Activated CD8-positive, alpha-beta T cell treated with anti-CD3 and anti-CD28 coated beads for 36 hours (primary cell): ENCODE measurements at regions of chr2 and their contacts with region 1.

Region 1: GRCh38 chr2:230762317-230762896 is 49.8 kb downstream of the CAB39 start:
- DNase-seq: peak; percentile 53
- ATAC-seq: peak; percentile 92
- H3K4me3 Mint-ChIP-seq: no peak overlapping the region
- H3K27ac Mint-ChIP-seq: no peak overlapping the region
- H3K4me1 Mint-ChIP-seq: peaks cover 59% of the 10 kb centered on the region
- H3K27me3 Mint-ChIP-seq: no peaks in the 10 kb centered on the region
- CTCF ChIP-seq: peak; percentile 44

Region 2: GRCh38 chr2:230738391-230738811 is 24.0 kb before region 1 on chr2:
- CTCF ChIA-PET with region 1: interaction called, 11 read pairs
- POLR2A ChIA-PET with region 1: interaction called, 3 read pairs
- intact Hi-C with region 1: no loop called
- DNase-seq: no peak
- ATAC-seq: no peak
- H3K4me3 Mint-ChIP-seq: no peak overlapping the region
- H3K27ac Mint-ChIP-seq: peak overlapping the region; percentile 65
- H3K4me1 Mint-ChIP-seq: peaks cover 70% of the 10 kb centered on the region
- H3K27me3 Mint-ChIP-seq: no peaks in the 10 kb centered on the region
- CTCF ChIP-seq: no peak